Esophagus muscularis mucosa (tissue), 4 donors: ENCODE measurements at regions of chr4 and their contacts with region 1.

Region 1: GRCh38 chr4:123785538-123785937 is 388.9 kb downstream of the SPRY1 start:
- DNase-seq: peak; percentile 93
- H3K4me3 ChIP-seq: peak overlapping the region in 2 of 4 donors; percentile 8 to 13
- H3K27ac ChIP-seq: peak overlapping the region; percentile 74 to 83 (median 78)
- H3K4me1 ChIP-seq: peaks cover 15 to 68% (median 60%) of the 10 kb centered on the region in 4 donors
- H3K27me3 ChIP-seq: no peaks in the 10 kb centered on the region
- CTCF ChIP-seq: no peak
- EP300 ChIP-seq: no peak
- POLR2A ChIP-seq: no peak

Region 2: DNA sequence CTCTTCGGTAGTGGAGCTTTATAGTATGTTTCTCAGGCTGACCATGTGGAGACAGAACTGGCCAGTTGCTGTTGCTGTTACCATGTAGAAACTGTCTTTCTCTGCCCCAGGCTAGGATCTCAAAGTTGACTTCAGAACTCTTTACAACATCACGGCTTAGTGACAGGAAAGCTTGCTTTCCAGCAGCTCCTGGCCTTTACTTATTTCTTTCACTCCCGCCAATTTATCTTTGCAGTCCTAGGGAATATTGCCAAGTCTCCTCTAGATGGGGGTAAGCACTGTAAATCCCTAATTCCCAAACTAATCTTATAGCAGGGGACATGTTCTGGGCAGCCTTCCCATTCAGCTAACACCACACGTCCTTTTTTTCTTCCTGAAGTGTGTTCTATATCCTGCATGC is 242.6 kb after region 1 on chr4:
- intact Hi-C with region 1: loop called (anchors 10 kb)
- DNase-seq: no peak
- H3K4me3 ChIP-seq: no peak overlapping the region
- H3K27ac ChIP-seq: peak overlapping the region; percentile 63 to 74 (median 65)
- H3K4me1 ChIP-seq: peaks cover 8 to 59% (median 54%) of the 10 kb centered on the region in 4 donors
- H3K27me3 ChIP-seq: no peaks in the 10 kb centered on the region
- CTCF ChIP-seq: no peak
- EP300 ChIP-seq: no peak
- POLR2A ChIP-seq: no peak